Sciatic nerve (tissue), 2 donors: ENCODE measurements at regions of chr10 and their contacts with region 1.

Region 1: GRCh38 chr10:66651308-66652082 is 274.3 kb upstream of the LRRTM3 start:
- DNase-seq: no peak
- ATAC-seq: no peak

Region 2: GRCh38 chr10:66265398-66265797 is 386.1 kb before region 1 on chr10:
- intact Hi-C with region 1: no loop called
- DNase-seq: no peak
- ATAC-seq: no peak

Region 3: GRCh38 chr10:66637273-66638036 is 14.0 kb before region 1 on chr10:
- intact Hi-C with region 1: loop called (anchors 2 kb)
- DNase-seq: no peak
- ATAC-seq: no peak